GM10248 (cell line): ENCODE measurements at regions of chr3 and their contacts with region 1.

Region 1: GRCh38 chr3:25678581-25678980 is 13.9 kb upstream of the TOP2B start:
- DNase-seq: no peak
- CTCF ChIP-seq: no peak

Region 2: GRCh38 chr3:25532431-25533162 is 146.0 kb before region 1 on chr3:
- CTCF ChIA-PET with region 1: no interaction called
- POLR2A ChIA-PET with region 1: no interaction called
- DNase-seq: peak; percentile 8
- CTCF ChIP-seq: peak; percentile 34

Region 3: GRCh38 chr3:25604107-25604805 is 74.3 kb before region 1 on chr3:
- CTCF ChIA-PET with region 1: no interaction called
- POLR2A ChIA-PET with region 1: no interaction called
- DNase-seq: no peak
- CTCF ChIP-seq: no peak

Region 4: DNA sequence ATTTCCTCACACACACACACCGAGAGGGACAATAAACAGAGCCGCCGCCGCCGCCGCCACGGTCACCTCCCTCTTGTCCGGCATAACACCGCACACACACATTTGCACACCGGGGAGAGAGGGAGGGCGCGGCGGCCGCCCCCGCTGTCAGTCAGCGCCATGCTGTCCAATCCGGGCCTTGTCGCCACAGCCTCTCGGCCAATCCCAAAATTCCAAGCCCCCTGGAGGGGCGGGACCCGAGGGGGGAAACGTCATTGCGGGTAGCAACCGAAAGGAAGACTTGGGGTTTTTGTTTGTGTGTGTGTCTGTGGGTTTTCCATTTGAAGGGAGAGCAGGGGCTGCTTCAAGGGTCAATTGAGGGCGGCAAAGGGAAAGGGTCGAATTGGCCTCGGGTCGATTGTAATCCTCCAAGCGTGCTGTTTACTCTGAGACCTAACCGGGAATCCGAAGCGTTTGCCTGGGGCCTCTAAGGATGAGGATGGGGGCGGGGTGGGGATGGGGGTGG is 13.7 kb before region 1 on chr3 and contains the start of gene TOP2B:
- CTCF ChIA-PET with region 1: interaction called, 14 read pairs
- POLR2A ChIA-PET with region 1: no interaction called
- DNase-seq: peak; percentile 96
- CTCF ChIP-seq: no peak